Activated CD4-positive, alpha-beta T cell treated with anti-CD3 and anti-CD28 coated beads for 36 hours (primary cell): ENCODE measurements at regions of chr16 and their contacts with region 1.

Region 1: DNA sequence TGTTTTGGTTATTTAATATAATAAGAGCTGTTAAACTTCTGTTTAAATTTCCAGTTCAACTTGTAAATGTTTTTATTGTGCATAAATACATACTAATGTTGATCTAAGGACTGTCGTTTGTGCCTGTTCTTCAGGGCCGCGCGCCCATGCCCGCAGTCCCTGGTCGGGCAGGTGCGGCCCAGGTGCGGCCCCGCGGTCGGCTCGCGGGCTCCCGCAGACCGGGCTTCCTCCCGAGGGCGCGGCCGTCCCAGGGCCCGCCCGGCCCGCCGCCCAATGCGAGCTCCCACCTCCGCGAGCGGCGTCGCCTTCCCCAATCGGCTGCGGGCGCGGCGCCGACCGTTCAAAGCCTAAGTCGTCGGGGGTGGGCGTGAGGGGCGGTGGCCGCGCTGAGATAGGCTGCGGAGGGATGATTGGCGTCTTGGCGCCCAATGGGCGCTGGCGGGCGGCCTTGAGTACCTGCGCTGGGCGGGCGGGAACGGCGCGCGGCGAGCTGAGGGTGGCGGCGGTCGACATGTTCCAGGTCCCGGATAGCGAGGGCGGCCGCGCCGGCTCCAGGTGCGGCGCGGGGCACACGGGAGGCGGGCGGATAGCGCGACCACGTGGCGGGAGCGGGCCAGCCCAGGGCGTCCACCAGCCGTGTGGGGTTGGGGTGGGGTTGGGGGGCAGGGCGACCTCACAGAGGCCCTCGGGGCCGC is at the start of gene JPT2:
- DNase-seq: peak; percentile 98
- ATAC-seq: peak; percentile 99
- H3K4me3 Mint-ChIP-seq: peak within 1 kb of the TSS; percentile 94
- H3K27ac Mint-ChIP-seq: peak within 1 kb of the TSS; percentile 89
- H3K4me1 Mint-ChIP-seq: peaks cover 26% of the 10 kb centered on the region
- H3K27me3 Mint-ChIP-seq: no peaks in the 10 kb centered on the region
- total RNA-seq, gene JPT2: 77.1 to 111 TPM

Region 2: DNA sequence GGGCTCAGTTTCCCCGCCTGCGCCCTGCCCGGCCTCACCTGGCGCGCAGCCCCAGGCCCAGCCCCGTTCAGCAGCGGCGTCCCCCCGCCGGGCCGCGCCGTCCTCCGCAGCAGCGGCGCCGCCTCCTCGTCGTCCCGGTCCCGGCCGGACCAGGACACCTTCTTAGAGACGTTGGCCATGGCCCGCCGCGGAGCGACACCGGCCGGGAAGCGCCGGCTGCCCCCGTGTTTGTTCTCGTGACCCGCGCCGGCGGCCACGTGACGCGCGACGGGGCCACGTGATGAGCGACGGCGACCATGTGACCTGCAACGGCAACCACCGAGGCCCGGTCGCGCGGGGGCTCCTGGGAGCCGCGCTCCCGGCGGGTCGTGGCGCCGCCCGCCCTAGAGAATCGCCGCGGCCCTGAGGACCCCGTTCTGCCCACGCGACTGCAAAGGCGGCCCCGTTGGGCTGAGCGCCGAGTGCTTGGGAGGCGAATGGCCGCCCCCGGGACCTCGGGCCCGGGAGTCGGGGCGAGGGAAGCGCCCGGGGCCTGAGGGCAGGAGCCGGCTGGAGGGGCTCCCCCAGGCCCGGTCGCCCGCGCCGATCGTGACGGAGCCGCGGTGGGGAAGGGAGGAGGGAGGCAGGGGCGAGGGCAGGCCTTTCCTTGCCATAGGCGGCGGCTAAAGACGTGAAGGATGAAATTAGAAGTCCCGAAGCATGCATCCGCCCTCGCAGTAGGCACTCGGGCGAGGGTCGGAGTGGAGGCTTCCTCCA is 203.0 kb before region 1 on chr16 and contains the start of gene CLCN7:
- CTCF ChIA-PET with region 1: no interaction called
- POLR2A ChIA-PET with region 1: no interaction called
- intact Hi-C with region 1: loop called in 1 of 2 experiments (anchors 1 kb)
- DNase-seq: peak; percentile 95
- ATAC-seq: peak; percentile 91
- H3K4me3 Mint-ChIP-seq: peak within 1 kb of the TSS; percentile 73
- H3K27ac Mint-ChIP-seq: peak within 1 kb of the TSS; percentile 81
- H3K4me1 Mint-ChIP-seq: peaks cover 22% of the 10 kb centered on the region
- H3K27me3 Mint-ChIP-seq: no peaks in the 10 kb centered on the region
- total RNA-seq, gene CLCN7: 29.9 to 33.7 TPM

Region 3: DNA sequence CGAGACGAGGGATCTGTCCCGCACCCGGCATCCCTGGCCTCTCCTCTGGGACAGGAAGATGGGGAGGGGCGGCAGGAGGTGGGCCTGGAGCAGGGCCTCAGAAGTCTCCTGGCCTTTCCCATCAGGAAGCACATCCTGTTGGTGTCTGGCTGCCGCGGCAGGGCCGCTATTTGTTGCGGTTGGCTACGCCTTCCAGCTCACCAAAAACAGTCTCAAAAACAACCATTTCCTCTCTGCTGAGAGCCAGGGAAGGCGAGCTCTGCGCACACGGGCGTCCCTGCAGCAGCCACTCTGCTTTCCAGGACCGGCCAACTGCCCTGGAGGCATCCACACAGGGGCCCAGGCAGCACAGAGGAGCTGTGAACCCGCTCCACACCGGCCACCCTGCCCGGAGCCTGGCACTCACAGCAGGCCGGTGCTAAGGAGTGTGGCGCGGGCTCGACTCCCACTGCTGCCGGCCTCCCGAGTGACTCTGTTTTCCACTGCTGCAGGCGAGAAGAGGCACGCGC is 144.5 kb before region 1 on chr16 and contains the start of gene TMEM204:
- CTCF ChIA-PET with region 1: no interaction called
- POLR2A ChIA-PET with region 1: no interaction called
- intact Hi-C with region 1: loop called in 1 of 2 experiments (anchors 2 kb)
- DNase-seq: peak; percentile 66
- ATAC-seq: peak; percentile 25
- H3K4me3 Mint-ChIP-seq: peak within 1 kb of the TSS; percentile 95
- H3K27ac Mint-ChIP-seq: peak within 1 kb of the TSS; percentile 94
- H3K4me1 Mint-ChIP-seq: peaks cover 39% of the 10 kb centered on the region
- H3K27me3 Mint-ChIP-seq: no peaks in the 10 kb centered on the region
- total RNA-seq, gene TMEM204: 12.6 to 17.5 TPM

Region 4: GRCh38 chr16:1645914-1646525 is 31.9 kb before region 1 on chr16:
- CTCF ChIA-PET with region 1: interaction called, 4 read pairs
- POLR2A ChIA-PET with region 1: no interaction called
- intact Hi-C with region 1: loop called in 1 of 2 experiments (anchors 1 kb)
- DNase-seq: peak; percentile 61
- ATAC-seq: peak; percentile 87
- H3K4me3 Mint-ChIP-seq: no peak overlapping the region
- H3K27ac Mint-ChIP-seq: peak overlapping the region; percentile 65
- H3K4me1 Mint-ChIP-seq: peaks cover 27% of the 10 kb centered on the region
- H3K27me3 Mint-ChIP-seq: no peaks in the 10 kb centered on the region

Region 5: DNA sequence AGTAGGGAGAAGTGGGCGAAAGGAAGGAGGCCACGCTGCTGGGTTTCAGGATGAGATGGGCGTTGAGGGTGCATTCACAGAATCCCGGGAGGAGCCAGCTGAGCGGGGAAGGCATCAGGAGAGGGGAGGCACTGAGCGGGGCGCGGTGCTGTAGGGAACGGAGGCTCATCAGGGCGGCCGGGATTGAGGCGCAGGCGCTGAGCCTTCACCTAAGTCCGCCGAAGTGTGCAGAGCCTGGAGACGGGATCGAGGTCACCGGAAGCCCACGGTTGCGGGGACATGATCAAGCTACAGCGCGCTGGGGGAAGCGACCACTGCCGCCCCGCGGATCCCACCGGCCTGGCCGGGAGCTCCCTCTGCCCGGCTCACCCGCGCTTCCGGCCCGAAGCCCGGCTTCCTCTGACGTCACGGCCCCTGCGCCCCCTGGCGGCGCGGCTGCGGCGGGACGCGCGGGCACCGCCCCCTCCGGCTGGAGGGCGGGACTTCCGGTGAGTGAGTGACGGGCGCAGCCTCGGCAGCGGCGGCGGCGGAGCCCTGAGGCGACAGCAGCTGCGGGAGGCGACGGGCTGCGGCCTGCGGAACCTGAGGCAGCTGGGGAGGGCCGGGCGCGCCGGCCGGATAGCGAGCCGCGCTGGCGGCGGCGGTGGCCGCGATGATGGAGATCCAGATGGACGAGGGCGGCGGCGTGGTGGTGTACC is 27.9 kb after region 1 on chr16 and contains the start of gene MAPK8IP3:
- CTCF ChIA-PET with region 1: interaction called, 14 read pairs
- POLR2A ChIA-PET with region 1: interaction called, 5 read pairs
- intact Hi-C with region 1: loop called (anchors 1 kb)
- DNase-seq: peak; percentile 96
- ATAC-seq: peak; percentile 80
- H3K4me3 Mint-ChIP-seq: peak within 1 kb of the TSS; percentile 92
- H3K27ac Mint-ChIP-seq: peak within 1 kb of the TSS; percentile 90
- H3K4me1 Mint-ChIP-seq: peaks cover 32% of the 10 kb centered on the region
- H3K27me3 Mint-ChIP-seq: no peaks in the 10 kb centered on the region
- total RNA-seq, gene MAPK8IP3: 56.7 to 57.6 TPM

Region 6: DNA sequence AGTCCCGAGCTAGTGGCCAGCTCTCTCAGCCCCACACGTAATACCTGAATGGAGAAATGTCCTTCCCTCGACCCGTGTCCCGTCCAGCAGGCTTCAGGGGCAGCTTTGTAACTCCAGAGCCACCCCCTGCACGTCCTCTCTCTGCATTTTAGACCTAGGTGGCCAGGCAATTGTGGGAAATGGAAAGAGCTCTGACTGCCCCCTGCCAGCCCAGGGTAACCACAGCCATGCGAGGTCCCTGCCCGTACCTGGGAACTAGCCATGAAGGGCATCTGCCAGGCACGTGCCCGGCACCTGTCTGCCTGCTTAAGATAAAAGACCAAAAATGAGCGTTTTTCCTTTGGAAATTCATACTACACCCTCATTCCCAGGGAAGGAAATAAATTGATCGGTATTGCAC is 37.3 kb after region 1 on chr16:
- CTCF ChIA-PET with region 1: no interaction called
- POLR2A ChIA-PET with region 1: no interaction called
- intact Hi-C with region 1: loop called in 1 of 2 experiments (anchors 5 kb)
- DNase-seq: no peak
- ATAC-seq: no peak
- H3K4me3 Mint-ChIP-seq: no peak overlapping the region
- H3K27ac Mint-ChIP-seq: no peak overlapping the region
- H3K4me1 Mint-ChIP-seq: peaks cover 26% of the 10 kb centered on the region
- H3K27me3 Mint-ChIP-seq: no peaks in the 10 kb centered on the region

Region 7: GRCh38 chr16:1782352-1783091 is 104.6 kb after region 1 on chr16 and contains the starts of genes NUBP2 and SPSB3:
- CTCF ChIA-PET with region 1: no interaction called
- POLR2A ChIA-PET with region 1: no interaction called
- intact Hi-C with region 1: loop called in 1 of 2 experiments (anchors 1 kb)
- DNase-seq: peak; percentile 99
- ATAC-seq: peak; percentile 93
- H3K4me3 Mint-ChIP-seq: peak within 1 kb of the TSS; percentile 94
- H3K27ac Mint-ChIP-seq: peak within 1 kb of the TSS; percentile 85
- H3K4me1 Mint-ChIP-seq: peaks cover 26% of the 10 kb centered on the region
- H3K27me3 Mint-ChIP-seq: no peaks in the 10 kb centered on the region
- total RNA-seq, gene NUBP2: 34.4 to 42.4 TPM
- total RNA-seq, gene SPSB3: 12.5 to 13.6 TPM

Region 8: GRCh38 chr16:1890708-1891050 is 212.7 kb after region 1 on chr16:
- CTCF ChIA-PET with region 1: no interaction called
- POLR2A ChIA-PET with region 1: no interaction called
- intact Hi-C with region 1: no loop called
- DNase-seq: no peak
- ATAC-seq: no peak
- H3K4me3 Mint-ChIP-seq: no peak overlapping the region
- H3K27ac Mint-ChIP-seq: no peak overlapping the region
- H3K4me1 Mint-ChIP-seq: no peaks in the 10 kb centered on the region
- H3K27me3 Mint-ChIP-seq: peaks cover 5% of the 10 kb centered on the region